ENCODE measurements at regions of chr20 and their contacts with region 1.

Region 1: DNA sequence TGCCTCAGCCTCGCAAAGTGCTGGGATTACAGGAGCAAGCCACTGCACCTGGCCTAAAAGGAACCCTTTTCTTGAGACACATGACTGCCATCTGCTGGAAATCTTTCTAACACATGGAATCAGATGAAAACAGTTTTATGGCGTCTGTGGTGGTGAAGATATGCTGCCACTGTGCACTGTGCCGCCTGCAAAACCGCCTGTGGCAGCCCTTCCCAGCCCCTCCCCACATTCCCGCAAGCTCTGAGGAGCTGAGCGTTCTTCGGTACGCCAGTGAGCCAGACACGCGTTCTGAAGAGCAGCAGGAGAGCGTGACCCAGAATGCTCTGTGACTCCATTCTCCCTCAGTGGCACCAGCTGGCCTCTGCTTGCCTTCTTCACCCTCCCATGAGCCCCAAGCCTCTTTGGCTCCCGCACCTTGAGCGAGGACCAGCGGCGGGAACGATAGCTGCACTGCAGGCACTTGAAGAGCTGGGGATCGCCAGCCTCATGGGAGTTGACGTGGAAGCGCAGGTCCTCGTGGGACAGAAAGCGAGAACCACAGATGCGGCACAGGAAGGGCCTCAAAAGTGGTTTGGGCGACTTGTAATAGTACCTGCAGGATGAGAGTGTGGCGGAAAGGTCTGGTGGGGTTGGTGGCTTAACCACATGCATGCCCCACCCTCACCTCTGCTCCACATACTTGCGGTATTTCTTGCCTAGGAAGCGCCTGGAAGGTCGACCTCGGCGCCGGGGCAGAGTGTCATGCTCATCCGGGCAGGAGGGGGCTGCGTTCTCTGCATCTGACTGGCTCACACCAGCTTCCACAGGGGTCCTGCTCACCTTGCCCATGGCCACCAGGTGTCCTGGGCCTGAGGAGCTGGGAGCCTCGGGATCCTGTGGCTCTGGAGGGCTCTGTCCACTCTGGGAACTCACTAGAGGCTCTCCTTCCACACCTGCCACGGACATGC is 8.7 kb downstream of the ZNF335 start:
- DNase-seq: no peak
- H3K4me3 Mint-ChIP-seq: no peak overlapping the region
- H3K27ac Mint-ChIP-seq: peak overlapping the region; percentile 69
- H3K4me1 Mint-ChIP-seq: peaks cover 21% of the 10 kb centered on the region
- H3K27me3 Mint-ChIP-seq: no peaks in the 10 kb centered on the region

Region 2: GRCh38 chr20:45798935-45799642 is 164.2 kb before region 1 on chr20:
- CTCF ChIA-PET with region 1: interaction called, 28 read pairs
- POLR2A ChIA-PET with region 1: no interaction called
- DNase-seq: peak; percentile 74
- H3K4me3 Mint-ChIP-seq: no peak overlapping the region
- H3K27ac Mint-ChIP-seq: peak overlapping the region; percentile 33
- H3K4me1 Mint-ChIP-seq: peaks cover 22% of the 10 kb centered on the region
- H3K27me3 Mint-ChIP-seq: no peaks in the 10 kb centered on the region

Region 3: GRCh38 chr20:45905505-45906079 is 57.7 kb before region 1 on chr20:
- CTCF ChIA-PET with region 1: no interaction called
- POLR2A ChIA-PET with region 1: no interaction called
- DNase-seq: no peak
- H3K4me3 Mint-ChIP-seq: no peak overlapping the region
- H3K27ac Mint-ChIP-seq: no peak overlapping the region
- H3K4me1 Mint-ChIP-seq: peaks cover 1% of the 10 kb centered on the region
- H3K27me3 Mint-ChIP-seq: no peaks in the 10 kb centered on the region

Region 4: DNA sequence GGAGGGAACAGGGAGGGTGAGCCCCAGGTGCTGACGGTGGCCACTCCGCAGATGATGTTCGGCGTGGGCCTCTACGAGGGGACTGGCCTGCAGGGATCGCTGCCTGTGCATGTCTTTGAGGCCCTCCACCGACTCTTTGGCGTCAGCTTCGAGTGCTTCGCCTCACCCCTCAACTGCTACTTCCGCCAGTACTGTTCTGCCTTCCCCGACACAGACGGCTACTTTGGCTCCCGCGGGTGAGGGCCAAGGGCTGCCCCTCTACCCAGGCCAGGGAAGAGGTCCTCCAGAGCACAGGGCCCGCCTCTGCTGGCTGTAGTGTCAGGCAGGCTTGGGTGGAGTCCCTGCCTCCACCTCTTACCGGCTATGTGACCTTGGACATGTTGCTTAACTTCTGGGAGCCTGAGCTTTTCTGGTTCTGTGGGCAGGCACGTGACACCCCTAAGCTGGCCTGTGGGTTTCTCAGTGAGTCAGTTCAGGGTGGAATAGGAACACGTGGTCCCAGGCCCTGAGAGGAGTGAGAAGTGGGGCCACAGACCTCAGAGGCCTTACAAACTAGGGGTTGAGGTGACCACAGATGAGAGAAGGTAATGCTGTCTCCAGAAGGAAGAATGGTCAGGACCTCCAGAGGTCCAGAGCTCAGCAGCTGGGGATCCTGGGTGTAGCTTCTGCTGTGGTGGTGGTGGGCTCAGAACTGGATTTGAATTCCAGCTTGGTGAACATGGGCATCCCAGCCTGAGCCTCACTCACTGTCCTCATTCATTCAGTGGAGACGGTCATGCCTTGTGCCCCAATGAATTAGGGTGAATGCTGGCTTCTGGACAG is 17.0 kb before region 1 on chr20:
- CTCF ChIA-PET with region 1: interaction called, 3 read pairs
- POLR2A ChIA-PET with region 1: interaction called, 14 read pairs
- DNase-seq: peak; percentile 75
- H3K4me3 Mint-ChIP-seq: no peak overlapping the region
- H3K27ac Mint-ChIP-seq: peak overlapping the region; percentile 80
- H3K4me1 Mint-ChIP-seq: peaks cover 38% of the 10 kb centered on the region
- H3K27me3 Mint-ChIP-seq: no peaks in the 10 kb centered on the region

Measured in activated CD4-positive, alpha-beta memory T cell treated with anti-CD3 and anti-CD28 coated beads, Interleukin-2, amount 10 ng/mL, durations not matched to agents 7 days and 5 days (primary cell).